ENCODE measurements at regions of chr5 and their contacts with region 1.

Region 1: DNA sequence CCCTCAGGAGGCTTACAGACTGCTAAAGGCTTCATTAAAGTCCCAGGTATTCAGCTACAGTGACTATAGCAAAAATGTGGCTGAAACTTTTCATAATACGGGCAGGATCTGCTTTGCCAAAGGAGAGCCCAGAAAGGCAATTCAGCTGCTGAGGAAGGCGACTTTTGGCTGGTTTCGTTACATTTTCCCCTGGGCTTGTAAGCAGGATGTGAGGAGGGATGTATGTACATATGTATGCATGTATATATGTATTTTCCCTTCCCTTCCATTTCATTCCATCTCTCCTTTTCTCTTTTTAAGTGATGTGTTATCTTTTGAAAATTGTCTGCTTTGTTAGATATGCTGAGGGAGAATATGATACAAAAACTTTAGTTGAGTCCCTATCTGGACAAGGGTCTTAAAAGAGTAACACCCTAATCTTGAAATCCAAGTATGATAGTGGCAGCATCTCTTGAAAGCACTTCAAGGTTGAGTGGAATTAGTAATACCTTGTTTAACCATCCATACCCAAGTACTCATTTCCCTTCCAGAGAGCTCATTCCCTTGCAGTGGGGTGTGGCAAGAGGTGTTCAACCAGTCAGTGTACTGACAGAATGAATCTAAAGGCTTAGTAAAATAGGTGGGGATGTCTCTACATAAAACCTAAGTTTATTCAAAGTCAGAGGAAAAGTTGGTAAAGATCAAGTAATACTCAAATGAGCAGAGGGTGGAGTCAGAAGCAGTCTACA is 28.7 kb downstream of the RAD1 start:
- DNase-seq: no peak
- H3K4me3 ChIP-seq: no peak overlapping the region
- H3K27ac ChIP-seq: no peak overlapping the region
- H3K4me1 ChIP-seq: no peaks in the 10 kb centered on the region
- H3K27me3 ChIP-seq: no peaks in the 10 kb centered on the region
- CTCF ChIP-seq: no peak

Region 2: DNA sequence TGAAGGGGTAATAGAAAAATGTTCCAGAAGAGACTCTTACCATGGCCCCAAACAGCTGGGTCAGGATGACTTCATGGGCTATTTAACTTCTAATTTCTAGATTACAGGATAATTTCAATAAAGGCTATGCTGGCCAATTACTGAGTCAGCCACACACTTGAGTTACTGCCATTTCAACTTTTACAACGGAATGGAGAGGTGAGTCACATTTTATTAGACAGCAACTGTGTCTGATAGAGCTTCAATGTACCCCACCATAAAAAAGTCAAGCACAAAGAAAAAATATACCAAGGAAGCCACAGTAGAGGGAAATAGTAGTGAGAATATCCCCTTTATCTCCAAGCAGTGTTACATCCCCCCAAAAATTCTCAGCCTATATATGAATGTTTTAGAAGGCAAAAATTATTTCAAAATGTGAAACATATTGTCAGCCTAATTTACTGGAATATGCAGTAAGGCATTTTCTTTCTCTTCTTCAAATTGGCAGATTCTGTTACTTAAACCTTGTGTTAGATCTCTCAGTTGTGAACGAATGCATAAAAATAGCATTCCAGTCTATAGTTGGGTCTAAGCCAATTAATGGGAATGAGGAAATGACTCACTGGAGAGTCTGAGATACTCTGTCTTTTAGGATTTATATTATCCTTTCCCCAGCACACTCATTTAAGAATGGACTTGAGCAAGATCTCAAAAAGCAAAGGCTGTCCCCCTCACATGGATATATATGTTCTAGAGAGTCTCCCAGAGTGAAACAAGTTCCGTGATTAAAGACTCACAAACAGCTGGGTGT is 277.5 kb before region 1 on chr5:
- CTCF ChIA-PET with region 1: no interaction called
- POLR2A ChIA-PET with region 1: no interaction called
- intact Hi-C with region 1: no loop called
- DNase-seq: peak; percentile 43 to 94
- H3K4me3 ChIP-seq: peak overlapping the region; percentile 12; the same call in 1 of the 2 replicates
- H3K27ac ChIP-seq: peak overlapping the region; percentile 82
- H3K4me1 ChIP-seq: peaks cover 39% of the 10 kb centered on the region
- H3K27me3 ChIP-seq: no peaks in the 10 kb centered on the region
- CTCF ChIP-seq: no peak

Region 3: DNA sequence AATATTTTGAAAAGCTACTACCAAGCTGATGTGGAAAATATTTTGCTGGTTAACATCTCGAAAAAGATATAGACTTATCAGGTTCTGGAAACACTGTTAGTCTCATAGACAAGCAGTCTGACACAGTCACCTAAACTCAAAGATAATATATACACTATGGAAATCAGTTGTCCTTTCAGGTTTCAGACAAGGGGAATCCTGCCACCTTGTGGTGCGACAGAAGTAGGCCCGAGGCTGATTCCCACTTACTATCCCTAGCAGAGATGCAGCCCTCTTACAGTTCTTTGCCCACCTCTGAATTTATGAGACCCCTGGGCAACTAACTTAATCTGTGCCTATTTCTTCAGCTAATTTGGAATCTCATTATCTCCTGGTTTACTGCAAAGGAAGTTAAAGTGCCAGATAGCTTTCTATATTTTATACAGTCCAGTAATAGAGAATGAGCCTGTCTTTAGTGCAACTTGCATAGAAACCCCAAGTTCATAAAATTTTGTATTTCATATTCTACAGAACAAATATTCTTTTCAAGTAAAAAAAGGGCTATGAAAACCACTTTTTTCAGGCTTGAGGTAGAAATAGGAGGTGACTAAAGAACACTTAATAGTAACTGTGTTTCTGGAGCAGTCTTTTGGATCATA is 11.8 kb after region 1 on chr5:
- CTCF ChIA-PET with region 1: interaction called, 16 read pairs
- POLR2A ChIA-PET with region 1: no interaction called
- intact Hi-C with region 1: no loop called
- DNase-seq: peak; percentile 71 to 84
- H3K4me3 ChIP-seq: no peak overlapping the region
- H3K27ac ChIP-seq: no peak overlapping the region
- H3K4me1 ChIP-seq: peaks cover 17% of the 10 kb centered on the region
- H3K27me3 ChIP-seq: no peaks in the 10 kb centered on the region
- CTCF ChIP-seq: peak; percentile 98

Region 4: DNA sequence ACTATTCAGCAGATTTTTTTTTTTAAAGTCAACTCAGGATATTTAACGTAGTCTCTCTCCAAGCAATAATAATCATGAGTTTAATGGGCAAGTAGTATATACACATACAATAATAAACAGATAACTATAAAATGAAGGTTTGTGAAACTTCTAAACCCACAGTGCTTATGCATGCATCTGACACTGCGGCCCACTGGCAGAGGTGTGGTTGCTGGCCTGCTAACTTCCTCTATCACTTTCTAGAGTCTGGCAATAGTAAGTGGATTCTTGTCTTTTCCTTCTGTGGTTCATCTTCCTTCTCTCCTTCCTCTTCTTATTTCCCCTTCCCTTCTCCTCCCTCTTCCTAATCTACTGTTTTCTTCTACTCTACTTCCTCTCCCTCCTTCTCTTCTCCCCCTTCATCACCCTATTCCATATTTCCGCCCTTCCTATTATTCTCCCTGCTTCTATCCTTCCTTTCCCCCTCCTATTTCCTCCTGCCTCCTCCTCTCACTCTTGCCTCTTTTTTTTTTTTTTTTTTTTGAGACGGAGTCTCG is 179.8 kb after region 1 on chr5:
- CTCF ChIA-PET with region 1: no interaction called
- POLR2A ChIA-PET with region 1: no interaction called
- intact Hi-C with region 1: no loop called
- DNase-seq: no peak
- H3K4me3 ChIP-seq: no peak overlapping the region
- H3K27ac ChIP-seq: no peak overlapping the region
- H3K4me1 ChIP-seq: no peaks in the 10 kb centered on the region
- H3K27me3 ChIP-seq: peaks cover 68% of the 10 kb centered on the region
- CTCF ChIP-seq: no peak